HEK293 (cell line): ENCODE measurements at regions of chr19 and their contacts with region 1.

Region 1: DNA sequence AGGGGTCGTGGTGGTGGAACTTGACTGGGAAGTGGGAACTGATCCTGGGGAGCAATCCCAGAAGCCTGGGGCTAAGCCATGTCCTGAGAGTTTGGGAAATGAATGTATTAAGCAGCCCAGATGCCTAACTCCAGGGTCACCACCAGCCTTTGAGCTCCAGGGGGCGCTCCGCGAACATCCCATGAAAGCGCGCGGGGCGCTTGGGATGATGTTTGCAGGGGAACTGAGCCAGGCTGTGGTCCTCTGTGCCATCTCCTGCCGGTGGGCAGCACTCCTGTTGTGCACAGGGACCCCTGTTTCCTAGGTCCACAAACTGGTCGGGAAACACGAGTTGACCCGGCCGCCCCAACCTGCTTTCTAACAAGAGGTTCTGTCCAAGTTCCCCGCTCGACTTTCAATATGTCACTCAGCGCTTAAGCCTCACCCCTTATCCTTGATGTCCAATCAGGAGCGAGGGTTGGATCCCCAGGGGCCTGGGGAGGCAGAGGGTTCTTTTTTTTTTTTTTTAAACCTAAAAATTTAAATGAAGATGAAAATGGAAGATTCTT is 14.4 kb downstream of the LEUTX start:
- H3K4me3 ChIP-seq: peak overlapping the region; percentile 29
- H3K27ac ChIP-seq: no peak overlapping the region
- H3K4me1 ChIP-seq: no peaks in the 10 kb centered on the region
- CTCF ChIP-seq: peak; percentile 99

Region 2: DNA sequence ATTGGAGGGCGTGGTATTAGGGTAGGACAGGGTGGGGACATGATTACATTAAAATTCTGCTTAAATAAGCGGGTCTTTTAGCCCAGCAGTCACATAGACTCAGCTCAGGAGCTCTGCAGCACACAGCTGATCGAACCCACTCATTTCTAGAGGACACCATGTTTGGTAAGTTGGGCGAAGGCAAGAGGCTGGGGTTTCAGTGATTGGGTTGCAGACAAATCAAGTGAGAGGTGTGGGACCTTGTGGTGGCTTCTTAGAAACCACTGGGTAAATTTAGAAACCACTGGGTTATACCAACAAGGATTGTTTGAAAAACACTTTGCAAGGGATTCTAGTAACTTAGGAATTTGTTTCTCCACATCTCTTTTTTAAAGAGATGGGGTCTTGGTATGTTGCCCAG is 14.3 kb before region 1 on chr19 and contains the start of gene LEUTX:
- CTCF ChIA-PET with region 1: interaction called, 79 read pairs
- POLR2A ChIA-PET with region 1: interaction called, 3 read pairs
- H3K4me3 ChIP-seq: no peak within 1 kb of the TSS
- H3K27ac ChIP-seq: no peak within 1 kb of the TSS
- H3K4me1 ChIP-seq: no peaks in the 10 kb centered on the region
- CTCF ChIP-seq: no peak

Region 3: DNA sequence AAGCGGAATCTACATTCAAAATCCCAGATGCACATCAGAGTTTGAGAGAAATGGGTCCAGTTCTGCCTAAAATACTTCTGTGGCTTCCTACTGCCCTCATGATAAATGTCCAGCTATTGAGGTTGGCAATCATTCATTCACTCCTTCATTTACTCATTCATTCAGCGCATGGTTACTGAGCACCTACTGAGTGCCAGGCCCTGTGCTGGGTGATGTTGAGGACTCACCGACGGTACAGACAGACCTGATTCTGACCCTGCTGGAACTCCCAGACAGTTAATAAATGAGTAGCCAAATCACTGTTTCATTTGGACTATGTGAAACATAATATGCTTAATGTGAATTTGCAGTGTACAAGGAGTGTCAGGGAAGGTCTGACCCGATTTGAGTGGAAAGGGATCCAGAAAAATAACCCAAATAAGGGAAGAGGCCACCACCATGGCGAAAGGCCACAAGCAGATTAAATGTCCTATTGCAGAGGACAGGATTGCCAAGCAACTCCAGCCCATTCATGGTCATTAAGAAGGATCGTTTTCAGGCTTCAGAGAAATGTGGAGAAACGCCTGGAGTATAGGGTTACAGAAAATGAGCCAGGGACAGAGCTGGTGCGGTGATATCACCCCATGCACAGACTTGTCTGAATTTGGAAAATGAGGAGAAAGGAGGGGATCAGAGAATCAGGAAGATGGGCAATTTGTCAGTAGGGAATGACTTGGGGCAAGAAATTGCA is 20.4 kb after region 1 on chr19:
- CTCF ChIA-PET with region 1: interaction called, 109 read pairs
- POLR2A ChIA-PET with region 1: interaction called, 4 read pairs
- H3K4me3 ChIP-seq: no peak overlapping the region
- H3K27ac ChIP-seq: 0 out of 2 replicates have a peak overlapping the region, but pooled peaks have one; percentile 53
- H3K4me1 ChIP-seq: peaks cover 11% of the 10 kb centered on the region
- CTCF ChIP-seq: no peak

Region 4: DNA sequence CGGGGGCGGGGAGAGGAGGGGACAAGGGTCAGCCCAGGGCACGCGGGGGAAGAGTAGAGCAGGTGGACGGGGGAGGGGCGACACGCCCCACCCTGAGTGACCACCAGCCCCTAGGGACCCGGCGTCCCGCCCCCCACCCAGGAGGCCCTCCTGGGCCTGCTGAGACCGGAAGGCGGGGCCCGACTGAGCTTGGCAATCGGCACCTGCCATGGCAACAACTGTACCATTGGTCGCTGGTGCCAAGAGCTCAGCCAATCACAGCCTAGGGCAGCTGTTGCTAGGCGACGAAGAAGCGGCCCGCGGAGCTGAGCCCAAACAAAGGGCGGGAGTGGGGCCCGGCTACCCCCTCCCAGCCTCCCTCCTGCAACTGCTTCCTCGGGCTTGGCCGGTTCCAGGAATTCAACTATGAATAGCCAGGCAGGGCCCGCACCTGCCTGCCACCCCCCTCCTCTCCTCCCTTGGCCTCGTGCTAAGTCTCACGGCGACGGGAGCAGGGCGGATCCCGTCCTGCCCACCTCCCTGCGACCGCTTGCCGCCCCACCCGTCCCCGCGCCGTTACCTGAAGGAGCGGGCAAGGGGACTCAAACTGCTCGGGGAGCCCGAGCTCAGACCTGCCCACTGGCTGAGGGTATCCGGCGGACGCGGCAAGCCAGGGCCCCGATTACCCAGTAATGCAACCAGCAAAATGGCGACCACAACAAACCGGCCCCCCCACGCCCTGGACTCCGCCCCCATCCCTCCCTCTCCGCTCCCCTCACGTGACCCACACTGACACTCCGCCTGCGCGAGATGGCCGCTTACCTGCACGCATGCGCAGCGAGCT is 40.6 kb after region 1 on chr19 and contains the start of gene DYRK1B:
- CTCF ChIA-PET with region 1: interaction called, 16 read pairs
- POLR2A ChIA-PET with region 1: interaction called, 12 read pairs
- H3K4me3 ChIP-seq: peak within 1 kb of the TSS; percentile 64
- H3K27ac ChIP-seq: peak within 1 kb of the TSS; percentile 95
- H3K4me1 ChIP-seq: peaks cover 18% of the 10 kb centered on the region
- CTCF ChIP-seq: peak; percentile 5; the same call in 1 of the 2 replicates